HEK293 (cell line): ENCODE measurements at regions of chr4 and their contacts with region 1.

Region 1: DNA sequence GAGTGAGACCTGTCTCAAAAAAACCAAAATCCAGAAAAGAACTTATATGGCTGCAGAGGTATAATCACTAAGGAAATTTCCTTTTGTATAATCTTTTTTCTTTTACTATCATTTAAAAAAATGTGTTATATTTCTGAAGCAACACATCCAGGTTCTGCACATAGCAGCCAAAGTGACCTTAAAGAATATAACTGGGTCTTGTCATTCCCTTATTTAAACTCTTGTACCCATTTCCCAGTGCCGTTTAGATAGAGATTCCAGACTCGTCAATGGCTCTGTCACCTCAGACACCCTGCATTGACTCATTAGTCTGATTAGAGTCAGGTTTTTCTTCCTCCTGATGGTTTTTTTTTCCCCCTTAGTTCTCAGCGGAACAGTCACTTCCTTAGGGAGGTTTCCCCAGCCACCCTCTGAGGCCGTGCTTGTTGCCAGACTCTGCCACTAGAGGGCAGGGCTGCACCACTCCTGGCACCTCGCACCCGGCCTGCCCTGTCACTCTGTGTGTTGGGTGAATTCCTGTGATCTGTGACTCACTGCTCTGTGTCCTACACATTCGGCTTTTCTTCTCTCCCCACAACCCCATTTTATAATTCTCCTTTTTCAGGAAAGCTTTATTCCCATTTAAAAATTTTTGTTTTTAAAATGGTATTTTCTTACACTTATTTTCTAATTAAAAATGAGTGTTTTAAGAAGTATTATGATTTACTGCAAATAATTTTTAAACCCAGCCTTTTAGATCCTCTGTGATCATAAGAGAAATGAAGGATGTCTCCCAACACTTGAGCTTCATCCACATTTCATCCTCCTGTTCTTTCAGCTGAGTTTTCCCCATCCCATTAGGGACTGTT is 32.1 kb downstream of the HTT start:
- H3K4me3 ChIP-seq: no peak overlapping the region
- H3K27ac ChIP-seq: no peak overlapping the region
- H3K4me1 ChIP-seq: no peaks in the 10 kb centered on the region
- CTCF ChIP-seq: peak; percentile 81

Region 2: DNA sequence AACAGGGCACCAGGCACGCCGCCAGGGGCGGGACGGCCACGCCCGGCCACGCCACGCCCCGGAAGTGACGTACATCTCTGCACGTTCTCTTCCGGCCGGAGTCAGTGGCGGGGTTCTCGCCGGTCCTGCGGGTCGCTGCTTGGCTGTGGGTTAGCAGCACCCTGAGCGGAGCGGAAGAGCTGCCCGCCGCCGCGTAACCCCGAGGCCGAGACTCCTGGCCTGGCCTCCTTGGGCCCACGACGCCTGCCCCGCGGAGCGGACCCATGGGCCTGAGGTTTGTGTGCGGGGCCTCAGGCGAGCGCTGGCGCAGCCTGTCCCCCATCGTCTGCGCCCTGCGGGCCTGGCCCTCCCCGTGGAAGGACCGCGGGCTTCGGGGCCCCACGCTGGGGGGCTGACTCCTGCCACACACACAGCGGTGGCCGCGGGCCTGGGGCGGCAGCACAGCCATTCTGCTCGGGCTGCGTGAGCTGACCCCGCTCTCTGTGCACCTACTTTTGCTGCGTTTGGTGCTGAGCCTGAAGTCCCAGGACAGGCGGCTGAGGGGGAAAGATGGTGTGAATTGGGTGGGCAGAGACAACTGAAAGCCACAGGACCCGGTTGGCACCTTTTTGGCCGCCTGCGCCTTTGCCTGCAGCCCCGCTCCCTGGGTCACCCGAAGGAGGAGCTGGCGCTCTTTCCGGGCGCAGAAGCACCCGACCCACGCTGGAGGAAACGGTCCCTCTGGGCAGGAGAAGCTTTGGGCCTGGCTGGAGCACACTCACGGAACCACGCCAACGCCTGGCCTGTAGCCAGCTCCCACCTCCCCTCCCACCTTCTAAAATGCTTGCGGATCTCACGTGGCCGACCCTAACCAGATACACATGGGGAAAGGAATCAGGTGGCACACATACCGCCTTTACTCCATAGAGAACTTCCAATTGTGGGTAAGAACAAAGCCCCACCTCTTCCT is 171.5 kb before region 1 on chr4:
- CTCF ChIA-PET with region 1: no interaction called
- POLR2A ChIA-PET with region 1: no interaction called
- H3K4me3 ChIP-seq: peak overlapping the region; percentile 92
- H3K27ac ChIP-seq: peak overlapping the region; percentile 74; the same call in 1 of the 2 replicates
- H3K4me1 ChIP-seq: no peaks in the 10 kb centered on the region; the same call in 1 of the 2 replicates
- CTCF ChIP-seq: no peak; the same call in 1 of the 2 replicates

Region 3: DNA sequence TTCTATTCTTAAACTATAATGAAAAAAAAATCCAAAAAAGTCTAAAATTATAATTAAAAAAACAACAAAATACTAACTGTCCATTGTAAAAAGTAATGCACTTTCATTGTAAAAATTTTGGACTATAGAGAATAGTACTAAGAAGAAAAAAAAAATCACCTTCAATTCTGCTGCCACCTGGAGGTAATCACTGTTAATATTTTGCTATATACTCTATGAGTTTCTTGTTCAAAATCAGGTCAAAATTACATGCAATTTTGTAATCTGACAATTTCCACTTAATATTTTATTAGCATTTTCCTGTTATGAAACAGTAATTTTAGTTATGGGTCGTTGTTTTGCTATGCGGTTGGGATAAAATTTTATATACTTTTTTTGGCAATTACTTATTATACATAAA is 29.9 kb after region 1 on chr4:
- CTCF ChIA-PET with region 1: interaction called, 23 read pairs
- POLR2A ChIA-PET with region 1: no interaction called
- H3K4me3 ChIP-seq: no peak overlapping the region
- H3K27ac ChIP-seq: no peak overlapping the region
- H3K4me1 ChIP-seq: no peaks in the 10 kb centered on the region
- CTCF ChIP-seq: no peak

Region 4: GRCh38 chr4:3148926-3149325 is 42.4 kb after region 1 on chr4:
- CTCF ChIA-PET with region 1: no interaction called
- POLR2A ChIA-PET with region 1: no interaction called
- H3K4me3 ChIP-seq: no peak overlapping the region
- H3K27ac ChIP-seq: no peak overlapping the region
- H3K4me1 ChIP-seq: no peaks in the 10 kb centered on the region
- CTCF ChIP-seq: no peak

Region 5: GRCh38 chr4:3330707-3331106 is 224.1 kb after region 1 on chr4:
- CTCF ChIA-PET with region 1: no interaction called
- POLR2A ChIA-PET with region 1: no interaction called
- H3K4me3 ChIP-seq: no peak overlapping the region
- H3K27ac ChIP-seq: no peak overlapping the region
- H3K4me1 ChIP-seq: no peaks in the 10 kb centered on the region
- CTCF ChIP-seq: no peak

Region 6: GRCh38 chr4:3388471-3389232 is 282.1 kb after region 1 on chr4:
- CTCF ChIA-PET with region 1: no interaction called
- POLR2A ChIA-PET with region 1: no interaction called
- H3K4me3 ChIP-seq: no peak overlapping the region
- H3K27ac ChIP-seq: no peak overlapping the region
- H3K4me1 ChIP-seq: peaks cover 9% of the 10 kb centered on the region; the same call in 1 of the 2 replicates
- CTCF ChIP-seq: no peak